Activated T-helper 2 cell treated with anti-CD3 and anti-CD28 coated beads, Interferon-gamma antibody, Interleukin-2, Interleukin-4, amounts not matched to agents 10 μg/mL and 5 μg/mL and 100 μg/mL, durations not matched to agents 14 hours and 24 hours and 36 hours (primary cell): ENCODE measurements at regions of chr3 and their contacts with region 1.

Region 1: GRCh38 chr3:185353823-185354614 is 8.9 kb upstream of the MAP3K13 start:
- DNase-seq: peak; percentile 70
- H3K4me3 Mint-ChIP-seq: no peak overlapping the region
- H3K27ac Mint-ChIP-seq: no peak overlapping the region
- H3K4me1 Mint-ChIP-seq: no peaks in the 10 kb centered on the region
- H3K27me3 Mint-ChIP-seq: peaks cover 24% of the 10 kb centered on the region

Region 2: GRCh38 chr3:185558395-185558794 is 204.4 kb after region 1 on chr3:
- intact Hi-C with region 1: loop called (anchors 5 kb)
- DNase-seq: no peak
- H3K4me3 Mint-ChIP-seq: no peak overlapping the region
- H3K27ac Mint-ChIP-seq: no peak overlapping the region
- H3K4me1 Mint-ChIP-seq: peaks cover 5% of the 10 kb centered on the region
- H3K27me3 Mint-ChIP-seq: no peaks in the 10 kb centered on the region

Region 3: GRCh38 chr3:185585859-185586685 is 232.1 kb after region 1 on chr3 and contains the start of gene SENP2:
- intact Hi-C with region 1: loop called (anchors 10 kb)
- DNase-seq: peak; percentile 100
- H3K4me3 Mint-ChIP-seq: peak within 1 kb of the TSS; percentile 82
- H3K27ac Mint-ChIP-seq: peak within 1 kb of the TSS; percentile 87
- H3K4me1 Mint-ChIP-seq: peaks cover 17% of the 10 kb centered on the region
- H3K27me3 Mint-ChIP-seq: no peaks in the 10 kb centered on the region
- total RNA-seq, gene SENP2: 31.5 and 34.2 TPM in 2 replicates